ENCODE measurements at regions of chr11 and their contacts with region 1.

Region 1: GRCh38 chr11:1832211-1832919 is 2.4 kb upstream of the SYT8 start:
- DNase-seq: peak; percentile 86
- ATAC-seq: peak; percentile 65
- H3K4me3 Mint-ChIP-seq: no peak overlapping the region
- H3K27ac Mint-ChIP-seq: no peak overlapping the region
- H3K4me1 Mint-ChIP-seq: peaks cover 2% of the 10 kb centered on the region
- H3K27me3 Mint-ChIP-seq: peaks cover 5% of the 10 kb centered on the region

Region 2: DNA sequence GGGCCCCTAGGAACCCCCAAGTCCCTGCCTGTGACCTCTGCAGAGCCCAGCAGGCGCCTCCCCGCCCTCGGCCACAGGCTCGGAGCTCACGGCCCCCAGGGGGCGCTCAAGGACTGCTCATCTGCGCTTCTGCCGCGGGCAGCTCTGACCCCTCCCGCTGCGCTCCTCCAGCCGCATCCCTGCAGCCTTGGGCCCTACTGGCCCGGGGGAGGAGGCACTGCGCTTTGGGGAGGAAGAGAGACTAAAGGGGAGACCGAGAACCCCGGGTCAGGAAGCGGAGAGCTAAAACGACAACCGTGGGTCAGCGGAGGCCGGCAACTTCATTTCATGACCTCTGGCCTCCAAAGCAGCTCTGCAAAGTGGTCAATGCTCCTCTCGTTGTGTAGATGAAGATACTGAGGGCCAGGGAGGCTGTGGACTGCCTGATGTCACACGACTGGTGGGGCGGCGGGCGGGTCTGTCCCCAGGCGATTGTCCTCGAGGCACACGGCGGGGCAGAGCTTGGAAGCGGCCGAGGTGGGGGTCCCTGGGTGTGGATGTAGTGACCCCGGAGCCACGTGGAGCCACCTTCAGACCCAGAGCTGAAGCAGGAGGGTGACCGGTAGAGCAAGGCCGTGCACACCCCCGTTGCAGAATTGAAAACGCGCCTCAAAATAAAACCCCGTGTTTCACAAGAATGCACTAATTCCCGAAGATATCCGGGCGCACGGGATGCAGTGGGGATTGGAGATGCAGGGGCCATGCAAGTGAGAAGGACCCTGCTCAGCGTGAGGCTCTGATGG is 138.1 kb before region 1 on chr11:
- POLR2A ChIA-PET with region 1: interaction called, 26 read pairs
- DNase-seq: peak; percentile 90
- ATAC-seq: peak; percentile 86
- H3K4me3 Mint-ChIP-seq: peak overlapping the region; percentile 30
- H3K27ac Mint-ChIP-seq: peak overlapping the region; percentile 48
- H3K4me1 Mint-ChIP-seq: peaks cover 6% of the 10 kb centered on the region
- H3K27me3 Mint-ChIP-seq: peaks cover 29% of the 10 kb centered on the region

Measured in activated naive CD8-positive, alpha-beta T cell treated with anti-CD3 and anti-CD28 coated beads, Interleukin-2, amount 10 ng/mL, durations not matched to agents 7 days and 5 days (primary cell).